ENCODE measurements at regions of chrX and their contacts with region 1.

Region 1: DNA sequence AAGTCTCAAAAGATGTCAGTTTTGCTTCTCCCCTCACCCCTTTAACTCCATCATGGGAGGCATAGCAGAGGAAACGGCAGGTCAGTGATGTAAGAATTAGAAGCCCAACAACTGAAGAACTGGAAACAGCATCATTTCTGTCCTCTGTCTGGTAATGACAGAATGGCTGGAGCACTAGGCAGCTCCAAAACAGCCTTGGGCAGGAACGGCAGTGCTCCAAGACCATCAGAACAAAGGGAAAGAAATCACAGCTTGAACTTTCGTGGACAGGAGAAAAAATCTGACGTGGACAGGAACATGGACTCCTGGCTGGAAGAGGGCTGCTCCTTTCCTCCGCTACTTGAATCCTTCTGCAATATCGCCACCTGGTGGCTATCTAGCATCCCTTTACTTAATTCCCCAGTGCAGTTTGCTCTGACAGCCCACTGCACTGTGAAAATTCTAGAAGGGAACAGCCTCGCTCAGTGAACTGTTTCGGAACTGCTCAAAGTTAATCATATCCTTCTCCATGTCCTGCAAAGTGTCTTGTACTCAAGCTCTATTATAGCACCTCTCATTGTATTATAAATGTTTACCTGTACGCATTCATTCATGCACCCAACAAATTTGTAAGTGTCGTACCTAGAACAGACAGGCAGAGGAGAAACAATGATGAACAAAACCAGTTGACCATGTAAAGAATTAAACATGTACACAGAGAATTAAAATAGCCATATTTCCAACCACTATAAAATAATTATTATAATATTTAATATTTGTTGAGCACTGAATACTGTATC is 20.4 kb downstream of the SLC25A53 start:
- DNase-seq: no peak
- ATAC-seq: peak; percentile 69
- H3K4me3 Mint-ChIP-seq: no peak overlapping the region
- H3K27ac Mint-ChIP-seq: no peak overlapping the region
- H3K4me1 Mint-ChIP-seq: peaks cover 19% of the 10 kb centered on the region
- H3K27me3 Mint-ChIP-seq: no peaks in the 10 kb centered on the region
- CTCF ChIP-seq: no peak

Region 2: DNA sequence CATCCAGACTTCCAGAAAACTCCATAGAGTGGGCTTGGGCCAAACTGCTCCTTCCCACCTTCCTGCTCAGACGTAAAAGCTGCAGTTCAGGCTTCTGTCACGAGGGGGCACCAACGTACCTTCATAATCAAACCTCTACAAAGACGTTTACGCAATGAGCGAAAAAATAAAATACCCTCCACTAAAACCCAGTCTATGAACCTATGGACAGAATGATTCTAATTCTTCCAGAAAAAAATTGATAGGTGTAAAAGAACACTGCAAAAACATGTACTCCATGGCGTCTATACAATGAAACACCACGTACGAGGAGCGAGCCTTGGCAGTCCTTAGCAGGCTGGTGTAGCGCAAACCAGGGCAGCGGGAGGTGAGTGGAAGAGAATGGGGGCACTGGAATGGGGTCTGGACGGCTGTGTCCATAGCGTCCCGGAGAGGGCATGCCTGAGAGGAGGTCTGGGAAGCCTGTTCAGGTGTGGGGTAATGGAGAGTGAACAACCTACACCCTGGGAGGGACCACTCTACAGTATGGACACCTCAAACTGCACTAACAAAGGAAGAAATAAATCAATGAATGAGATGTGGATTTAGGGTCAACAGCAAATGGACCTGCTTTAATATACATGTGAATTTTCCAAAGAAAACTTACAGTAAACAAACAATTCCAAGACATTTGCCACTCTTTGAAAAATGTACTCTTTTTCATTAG is 602.8 kb before region 1 on chrX:
- CTCF ChIA-PET with region 1: no interaction called
- POLR2A ChIA-PET with region 1: no interaction called
- intact Hi-C with region 1: loop called (anchors 10 kb)
- DNase-seq: peak; percentile 45
- ATAC-seq: peak; percentile 40
- H3K4me3 Mint-ChIP-seq: peak overlapping the region; percentile 61
- H3K27ac Mint-ChIP-seq: no peak overlapping the region
- H3K4me1 Mint-ChIP-seq: peaks cover 5% of the 10 kb centered on the region
- H3K27me3 Mint-ChIP-seq: no peaks in the 10 kb centered on the region
- CTCF ChIP-seq: no peak

Region 3: GRCh38 chrX:103845165-103845653 is 291.2 kb before region 1 on chrX:
- CTCF ChIA-PET with region 1: interaction called, 9 read pairs
- POLR2A ChIA-PET with region 1: no interaction called
- intact Hi-C with region 1: loop called (anchors 1 kb)
- DNase-seq: no peak
- ATAC-seq: no peak
- H3K4me3 Mint-ChIP-seq: no peak overlapping the region
- H3K27ac Mint-ChIP-seq: no peak overlapping the region
- H3K4me1 Mint-ChIP-seq: no peaks in the 10 kb centered on the region
- H3K27me3 Mint-ChIP-seq: no peaks in the 10 kb centered on the region
- CTCF ChIP-seq: no peak

Region 4: DNA sequence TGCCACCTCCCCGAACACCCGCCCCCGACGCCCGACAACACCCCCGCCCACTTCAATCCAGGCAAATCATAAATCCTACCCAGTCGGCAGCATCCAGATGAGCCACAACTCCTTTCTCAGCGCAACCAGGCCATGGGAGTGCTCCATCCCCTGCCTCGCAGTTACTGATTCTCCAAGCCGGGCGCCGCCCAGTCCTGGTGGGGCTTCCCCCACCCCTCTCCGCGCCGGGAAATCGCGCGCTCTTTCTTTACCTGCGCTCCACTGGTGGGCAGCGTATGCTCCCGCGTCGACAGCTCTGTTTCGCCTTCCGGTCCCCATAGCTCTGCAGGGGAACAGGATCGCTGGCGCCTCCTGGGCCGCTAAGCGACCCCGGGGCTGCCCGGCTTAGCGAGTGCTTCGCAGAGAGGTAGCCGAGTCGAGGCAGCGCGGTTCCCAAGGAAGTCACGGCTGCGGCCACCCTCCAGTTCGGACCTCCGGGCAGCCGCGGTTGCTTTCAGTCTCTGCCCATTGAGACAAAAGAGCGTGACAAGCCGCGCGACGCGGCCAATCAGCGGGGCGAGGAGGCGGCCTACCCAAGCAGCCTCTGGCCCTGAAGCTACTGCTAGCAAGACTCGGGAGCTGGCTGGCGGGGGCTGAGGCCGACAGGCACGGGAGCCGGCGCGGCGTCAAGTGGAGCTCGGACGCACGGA is 217.7 kb before region 1 on chrX:
- CTCF ChIA-PET with region 1: interaction called, 3 read pairs
- POLR2A ChIA-PET with region 1: no interaction called
- intact Hi-C with region 1: loop called (anchors 5 kb)
- DNase-seq: peak; percentile 45
- ATAC-seq: peak; percentile 70
- H3K4me3 Mint-ChIP-seq: peak overlapping the region; percentile 87
- H3K27ac Mint-ChIP-seq: peak overlapping the region; percentile 84
- H3K4me1 Mint-ChIP-seq: peaks cover 11% of the 10 kb centered on the region
- H3K27me3 Mint-ChIP-seq: no peaks in the 10 kb centered on the region
- CTCF ChIP-seq: no peak

Region 5: GRCh38 chrX:104098151-104098808 is 38.1 kb before region 1 on chrX:
- CTCF ChIA-PET with region 1: interaction called, 26 read pairs
- POLR2A ChIA-PET with region 1: no interaction called
- intact Hi-C with region 1: loop called (anchors 1 kb)
- DNase-seq: no peak
- ATAC-seq: peak; percentile 68
- H3K4me3 Mint-ChIP-seq: no peak overlapping the region
- H3K27ac Mint-ChIP-seq: no peak overlapping the region
- H3K4me1 Mint-ChIP-seq: peaks cover 4% of the 10 kb centered on the region
- H3K27me3 Mint-ChIP-seq: peaks cover 2% of the 10 kb centered on the region
- CTCF ChIP-seq: no peak

Region 6: DNA sequence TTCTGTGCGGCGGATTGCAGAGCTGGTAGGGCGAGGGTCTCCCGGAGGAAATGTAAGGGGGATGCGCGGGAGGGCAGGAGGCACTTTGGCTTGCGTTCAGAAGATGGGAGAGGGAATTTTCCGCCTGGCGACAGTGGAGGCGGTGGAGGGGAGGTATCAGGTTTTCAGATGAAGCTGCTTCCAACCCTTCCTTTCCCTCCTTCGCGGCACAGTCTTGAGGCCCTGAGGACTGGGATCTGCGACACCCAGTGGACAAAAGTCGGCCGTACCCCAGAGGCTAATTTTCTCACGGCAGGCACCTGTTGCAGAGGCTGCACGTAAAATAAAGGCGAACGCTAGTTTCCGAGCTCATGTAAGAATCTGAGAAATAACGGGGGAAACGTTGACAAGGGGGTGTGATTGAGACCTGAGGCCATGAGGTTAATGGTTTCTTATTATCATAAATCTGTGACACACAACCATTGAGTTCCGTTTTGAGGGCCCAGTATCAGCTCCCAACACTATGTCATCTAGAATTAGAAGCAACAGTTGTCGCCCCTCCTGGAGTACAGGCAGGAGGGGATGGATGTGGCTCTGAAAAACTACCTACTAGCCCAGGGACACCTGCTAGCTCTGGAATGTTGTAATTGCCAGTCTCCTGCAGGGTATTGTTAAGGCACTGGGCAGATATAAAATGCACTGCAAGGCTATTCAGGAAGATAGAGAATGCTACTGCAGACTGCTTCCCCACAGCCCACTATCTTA is 23.0 kb before region 1 on chrX:
- CTCF ChIA-PET with region 1: interaction called, 20 read pairs
- POLR2A ChIA-PET with region 1: no interaction called
- intact Hi-C with region 1: no loop called
- DNase-seq: peak; percentile 18
- ATAC-seq: peak; percentile 67
- H3K4me3 Mint-ChIP-seq: peak overlapping the region; percentile 90
- H3K27ac Mint-ChIP-seq: peak overlapping the region; percentile 77
- H3K4me1 Mint-ChIP-seq: peaks cover 45% of the 10 kb centered on the region
- H3K27me3 Mint-ChIP-seq: no peaks in the 10 kb centered on the region
- CTCF ChIP-seq: no peak

Region 7: GRCh38 chrX:104165894-104166737 is 29.7 kb after region 1 on chrX and contains the start of gene FAM199X:
- CTCF ChIA-PET with region 1: no interaction called
- POLR2A ChIA-PET with region 1: no interaction called
- intact Hi-C with region 1: no loop called
- DNase-seq: peak; percentile 76
- ATAC-seq: peak; percentile 98
- H3K4me3 Mint-ChIP-seq: peak within 1 kb of the TSS; percentile 87
- H3K27ac Mint-ChIP-seq: peak within 1 kb of the TSS; percentile 87
- H3K4me1 Mint-ChIP-seq: peaks cover 32% of the 10 kb centered on the region
- H3K27me3 Mint-ChIP-seq: no peaks in the 10 kb centered on the region
- CTCF ChIP-seq: no peak
- total RNA-seq, gene FAM199X: 11.7 and 14.3 TPM in 2 replicates

Region 8: DNA sequence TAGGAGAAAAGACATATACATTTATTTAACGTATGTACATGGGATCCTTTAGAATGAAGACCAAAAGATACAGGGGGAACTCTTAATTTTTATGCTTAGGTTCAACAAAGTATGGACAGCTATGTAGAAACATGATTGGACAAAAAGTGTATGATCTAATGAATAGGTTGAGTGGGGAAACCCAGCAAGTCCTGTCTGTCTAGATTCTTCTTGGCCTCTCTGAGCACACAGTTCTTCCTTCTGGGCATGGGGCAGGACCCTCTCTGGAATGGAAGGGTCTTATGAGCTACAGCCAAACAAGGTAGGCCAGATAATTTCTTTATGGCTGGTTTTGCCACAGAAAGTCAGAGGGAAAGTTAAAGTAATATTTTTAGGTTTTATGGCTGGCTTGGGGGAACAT is 680.5 kb after region 1 on chrX:
- CTCF ChIA-PET with region 1: no interaction called
- POLR2A ChIA-PET with region 1: no interaction called
- intact Hi-C with region 1: no loop called
- DNase-seq: no peak
- ATAC-seq: no peak
- H3K4me3 Mint-ChIP-seq: no peak overlapping the region
- H3K27ac Mint-ChIP-seq: no peak overlapping the region
- H3K4me1 Mint-ChIP-seq: no peaks in the 10 kb centered on the region
- H3K27me3 Mint-ChIP-seq: no peaks in the 10 kb centered on the region
- CTCF ChIP-seq: no peak

Region 9: DNA sequence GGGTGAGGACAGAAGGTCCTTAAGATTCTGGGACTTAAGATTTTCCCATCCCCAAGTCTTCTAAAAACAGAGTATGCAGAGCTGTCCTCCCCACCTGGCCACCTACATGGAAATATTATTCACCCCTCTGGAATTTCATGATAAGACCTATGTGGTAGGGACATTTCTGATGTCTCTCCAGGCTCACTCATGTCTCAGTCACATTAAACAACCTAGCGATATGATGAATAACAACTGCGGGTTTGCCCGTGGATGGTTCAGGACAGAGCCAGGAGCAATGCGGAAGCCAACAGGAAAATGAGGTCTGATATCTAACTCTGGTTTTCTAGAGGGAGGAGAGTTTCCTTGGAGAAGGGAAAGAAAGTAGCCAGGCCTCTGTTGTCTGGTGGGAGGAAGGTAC is 1036.6 kb after region 1 on chrX:
- CTCF ChIA-PET with region 1: no interaction called
- POLR2A ChIA-PET with region 1: no interaction called
- intact Hi-C with region 1: no loop called
- DNase-seq: no peak
- ATAC-seq: no peak
- H3K4me3 Mint-ChIP-seq: no peak overlapping the region
- H3K27ac Mint-ChIP-seq: no peak overlapping the region
- H3K4me1 Mint-ChIP-seq: no peaks in the 10 kb centered on the region
- H3K27me3 Mint-ChIP-seq: no peaks in the 10 kb centered on the region
- CTCF ChIP-seq: no peak

Measured in activated B cell treated with CpG ODN at 0.5 μM for 24 hours (primary cell).